Activated T-helper 1 cell treated with anti-CD3 and anti-CD28 coated beads, Interleukin-12 subunit alpha, Interleukin-12 subunit beta, Interleukin-2, Interleukin-4 antibody, amounts not matched to agents 30 ng/mL and 10 ng/mL and 1 ng/mL, durations not matched to agents 14 hours and 24 hours and 36 hours (primary cell): ENCODE measurements at regions of chr17 and their contacts with region 1.

Region 1: GRCh38 chr17:48841395-48841831 is 10.6 kb downstream of the CALCOCO2 start:
- DNase-seq: peak; percentile 54
- H3K4me3 Mint-ChIP-seq: peak overlapping the region; percentile 66
- H3K27ac Mint-ChIP-seq: peak overlapping the region; percentile 9
- H3K4me1 Mint-ChIP-seq: peaks cover 54% of the 10 kb centered on the region
- H3K27me3 Mint-ChIP-seq: peaks cover 2% of the 10 kb centered on the region

Region 2: DNA sequence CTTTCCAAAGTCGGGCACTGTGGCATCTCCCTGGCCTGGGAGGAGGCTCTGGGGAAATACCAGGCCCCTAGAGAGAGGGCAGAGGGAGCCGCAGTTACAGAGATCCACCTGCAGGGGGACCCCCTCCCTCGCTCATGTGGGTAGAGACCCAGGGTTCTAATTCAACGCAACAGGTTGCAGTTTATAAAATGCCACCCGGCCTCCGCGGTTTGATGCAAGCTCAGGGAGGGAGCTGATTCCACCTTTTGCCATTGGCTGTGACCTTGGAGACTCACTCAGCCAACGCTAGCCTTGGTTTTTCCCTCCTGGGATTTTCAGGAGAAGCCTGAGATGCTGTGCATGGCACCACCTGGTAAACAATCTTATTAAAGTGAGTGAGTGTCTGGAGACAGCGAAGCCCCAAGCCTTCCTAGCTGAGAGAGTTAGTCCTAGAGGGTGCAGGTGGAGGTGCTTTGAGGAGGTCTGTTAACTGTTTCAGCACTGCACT is 36.4 kb before region 1 on chr17:
- intact Hi-C with region 1: loop called (anchors 5 kb)
- DNase-seq: peak; percentile 54
- H3K4me3 Mint-ChIP-seq: no peak overlapping the region
- H3K27ac Mint-ChIP-seq: no peak overlapping the region
- H3K4me1 Mint-ChIP-seq: no peaks in the 10 kb centered on the region
- H3K27me3 Mint-ChIP-seq: peaks cover 27% of the 10 kb centered on the region

Region 3: DNA sequence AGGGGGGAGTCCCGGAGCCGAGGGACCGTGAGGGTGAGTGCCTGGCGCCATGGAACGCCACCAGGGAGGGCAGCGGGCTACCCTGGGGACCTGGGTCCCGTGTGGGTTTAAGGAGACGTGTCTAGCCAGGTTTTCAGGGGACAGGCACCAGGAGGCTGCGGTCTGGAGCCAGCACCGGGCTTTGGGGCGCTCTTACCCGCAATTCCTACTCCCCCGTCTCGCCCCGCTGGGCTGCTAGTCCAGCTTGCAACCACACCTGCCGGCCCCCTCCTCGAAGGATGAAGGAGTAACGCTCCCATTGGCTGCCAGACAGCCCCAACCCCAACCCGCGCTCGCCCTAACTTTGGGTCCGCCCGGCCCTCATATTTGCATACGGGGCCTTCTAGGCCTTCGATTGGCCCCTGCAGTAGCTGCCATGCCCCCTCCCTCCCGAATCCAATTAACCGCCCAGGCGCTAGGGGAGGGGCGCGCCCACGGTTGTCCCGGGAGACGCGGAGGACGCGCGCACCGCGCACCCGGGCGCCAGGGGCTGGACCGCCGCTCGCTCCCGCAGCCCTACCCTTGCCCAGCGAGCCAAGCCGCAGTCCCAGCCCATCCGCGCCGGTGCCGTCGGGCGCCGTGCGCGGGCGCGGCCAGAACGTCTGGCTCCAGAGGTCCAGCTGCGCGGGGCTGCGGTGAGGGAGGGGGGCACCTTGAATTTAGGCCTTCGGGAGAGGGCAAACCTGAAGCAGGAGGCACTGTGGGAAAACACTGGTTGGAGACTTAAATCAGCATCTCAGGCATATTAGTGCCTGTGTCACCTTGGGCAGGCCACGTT is 24.4 kb before region 1 on chr17 and contains the start of gene TTLL6:
- intact Hi-C with region 1: loop called (anchors 1 kb)
- DNase-seq: peak; percentile 81
- H3K4me3 Mint-ChIP-seq: peak within 1 kb of the TSS; percentile 81
- H3K27ac Mint-ChIP-seq: no peak within 1 kb of the TSS
- H3K4me1 Mint-ChIP-seq: peaks cover 18% of the 10 kb centered on the region
- H3K27me3 Mint-ChIP-seq: peaks cover 65% of the 10 kb centered on the region
- total RNA-seq, gene TTLL6: not detected in 2 replicates